MCF 10A (cell line): ENCODE measurements at regions of chr5 and their contacts with region 1.

Region 1: DNA sequence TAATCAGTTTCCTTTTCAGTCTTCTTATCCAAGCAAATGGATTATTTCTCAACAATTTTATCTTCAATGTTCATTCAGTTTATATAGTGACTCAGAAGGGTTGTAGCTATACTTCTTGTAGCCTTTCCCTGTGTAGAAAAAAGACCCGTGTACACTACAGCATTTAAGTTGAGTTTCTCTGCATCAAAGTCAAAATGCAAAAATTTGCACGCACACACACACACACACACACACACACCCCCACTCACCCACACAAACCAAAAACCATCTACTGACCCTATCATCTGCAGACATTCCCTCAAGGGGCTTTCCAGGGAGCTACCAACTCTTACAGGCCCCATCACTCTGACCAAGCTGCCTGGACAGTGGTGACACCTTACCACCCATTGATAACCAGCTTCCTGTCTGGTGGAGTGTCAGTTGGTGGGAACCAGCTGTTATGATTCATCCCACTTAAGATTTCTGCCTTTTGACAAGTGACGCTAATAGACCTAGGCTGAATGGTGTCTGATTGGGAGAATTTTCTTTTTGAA is 12.2 kb upstream of the ELL2 start:
- DNase-seq: no peak
- H3K4me3 Mint-ChIP-seq: no peak overlapping the region
- H3K27ac Mint-ChIP-seq: no peak overlapping the region
- H3K4me1 Mint-ChIP-seq: no peaks in the 10 kb centered on the region
- H3K27me3 Mint-ChIP-seq: no peaks in the 10 kb centered on the region
- CTCF ChIP-seq: no peak

Region 2: GRCh38 chr5:95543017-95543705 is 430.7 kb before region 1 on chr5:
- CTCF ChIA-PET with region 1: no interaction called
- POLR2A ChIA-PET with region 1: no interaction called
- intact Hi-C with region 1: no loop called
- DNase-seq: no peak
- H3K4me3 Mint-ChIP-seq: no peak overlapping the region
- H3K27ac Mint-ChIP-seq: no peak overlapping the region
- H3K4me1 Mint-ChIP-seq: peaks cover 11% of the 10 kb centered on the region
- H3K27me3 Mint-ChIP-seq: no peaks in the 10 kb centered on the region
- CTCF ChIP-seq: no peak

Region 3: DNA sequence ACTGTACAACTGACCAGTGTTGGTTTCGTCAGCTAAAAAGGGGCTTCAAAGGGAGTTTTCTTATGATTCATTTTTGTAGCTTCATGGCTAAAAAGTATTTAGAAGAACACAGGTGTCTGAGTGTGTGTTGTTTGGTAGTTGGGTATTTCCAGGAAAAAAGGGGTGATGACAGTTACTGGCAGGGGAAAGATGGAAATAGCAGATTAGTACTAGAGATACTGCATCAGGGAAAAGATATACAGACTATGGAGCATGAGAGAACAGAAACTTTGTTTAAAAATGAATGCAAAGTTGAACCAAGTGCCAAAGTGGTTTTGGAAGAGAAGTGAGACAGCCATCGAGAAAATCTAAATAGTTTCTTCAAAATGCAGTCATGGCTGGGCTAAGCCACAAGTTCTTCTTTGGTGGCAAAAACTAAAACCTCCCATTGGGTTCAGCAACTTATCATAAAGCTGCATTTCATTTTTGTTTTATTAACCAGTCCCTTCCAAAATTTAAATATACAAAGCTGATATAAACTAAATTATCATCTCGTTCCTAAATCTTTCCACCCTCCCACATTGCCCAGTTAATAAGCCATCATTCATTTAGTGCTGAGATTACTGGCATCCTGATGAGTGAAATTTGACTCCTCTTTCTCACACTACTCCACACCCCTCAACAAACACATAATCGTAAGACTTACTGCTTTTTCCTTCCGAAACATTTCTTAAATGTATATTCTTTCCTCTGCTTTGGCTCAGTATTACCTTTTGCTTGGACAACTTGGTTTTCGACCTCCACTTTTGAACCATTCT is 45.7 kb before region 1 on chr5:
- CTCF ChIA-PET with region 1: no interaction called
- POLR2A ChIA-PET with region 1: no interaction called
- intact Hi-C with region 1: no loop called
- DNase-seq: no peak
- H3K4me3 Mint-ChIP-seq: no peak overlapping the region
- H3K27ac Mint-ChIP-seq: peak overlapping the region; percentile 28
- H3K4me1 Mint-ChIP-seq: peaks cover 49% of the 10 kb centered on the region
- H3K27me3 Mint-ChIP-seq: no peaks in the 10 kb centered on the region
- CTCF ChIP-seq: no peak

Region 4: GRCh38 chr5:95938347-95938746 is 35.5 kb before region 1 on chr5:
- CTCF ChIA-PET with region 1: no interaction called
- POLR2A ChIA-PET with region 1: no interaction called
- intact Hi-C with region 1: no loop called
- DNase-seq: no peak
- H3K4me3 Mint-ChIP-seq: no peak overlapping the region
- H3K27ac Mint-ChIP-seq: peak overlapping the region; percentile 19
- H3K4me1 Mint-ChIP-seq: peaks cover 23% of the 10 kb centered on the region
- H3K27me3 Mint-ChIP-seq: no peaks in the 10 kb centered on the region
- CTCF ChIP-seq: no peak

Region 5: DNA sequence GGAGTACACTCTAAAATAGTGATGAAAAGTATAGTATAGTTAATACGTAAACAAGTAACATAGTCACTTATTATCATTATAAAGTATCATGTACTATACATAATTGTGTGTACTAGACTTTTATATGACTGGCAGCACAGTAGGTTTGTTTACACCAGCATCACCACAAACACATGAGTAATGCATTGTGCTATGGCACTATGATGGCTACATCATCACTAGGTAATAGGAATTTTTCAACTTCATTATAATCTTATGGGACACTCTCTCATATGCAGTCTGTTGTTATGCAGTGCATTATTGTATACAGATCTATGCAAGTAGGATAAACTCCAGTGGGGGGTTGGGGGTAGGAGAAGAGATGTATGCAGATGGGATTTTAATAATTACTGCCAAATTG is 40.5 kb after region 1 on chr5:
- CTCF ChIA-PET with region 1: no interaction called
- POLR2A ChIA-PET with region 1: interaction called, 3 read pairs
- intact Hi-C with region 1: loop called (anchors 5 kb)
- DNase-seq: no peak
- H3K4me3 Mint-ChIP-seq: no peak overlapping the region
- H3K27ac Mint-ChIP-seq: no peak overlapping the region
- H3K4me1 Mint-ChIP-seq: peaks cover 13% of the 10 kb centered on the region
- H3K27me3 Mint-ChIP-seq: no peaks in the 10 kb centered on the region
- CTCF ChIP-seq: no peak

Region 6: DNA sequence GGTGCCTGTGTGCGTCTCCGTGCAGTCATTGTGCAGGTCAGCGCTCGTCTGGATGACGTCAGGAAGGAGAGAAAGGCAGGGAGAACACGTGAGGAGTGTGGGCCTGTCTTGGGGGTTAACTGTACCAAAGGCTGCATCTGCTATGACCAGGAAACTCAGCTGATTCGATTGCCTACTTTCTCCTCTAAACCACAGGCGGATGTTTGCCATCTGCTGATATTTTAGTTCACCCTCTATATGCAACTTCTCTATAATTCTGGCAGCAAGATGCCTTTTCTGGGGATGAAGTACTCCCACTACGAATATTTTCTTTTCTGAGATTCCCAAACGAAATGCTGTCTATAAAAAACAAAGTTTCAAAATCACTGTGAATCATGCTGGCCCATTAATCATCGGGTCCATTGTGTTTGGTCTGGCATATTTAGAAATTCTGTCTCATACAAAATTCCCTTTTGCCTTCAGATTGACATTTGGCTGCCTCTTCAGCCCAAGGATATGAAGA is 434.5 kb after region 1 on chr5:
- CTCF ChIA-PET with region 1: no interaction called
- POLR2A ChIA-PET with region 1: no interaction called
- intact Hi-C with region 1: no loop called
- DNase-seq: peak; percentile 98
- H3K4me3 Mint-ChIP-seq: peak overlapping the region; percentile 61
- H3K27ac Mint-ChIP-seq: peak overlapping the region; percentile 98
- H3K4me1 Mint-ChIP-seq: peaks cover 22% of the 10 kb centered on the region
- H3K27me3 Mint-ChIP-seq: no peaks in the 10 kb centered on the region
- CTCF ChIP-seq: no peak